ENCODE measurements at regions of chr3 and their contacts with region 1.

Region 1: GRCh38 chr3:71006810-71007785 is 576.4 kb downstream of the FOXP1 start:
- DNase-seq: no peak
- ATAC-seq: peak; percentile 48; the same call in 2 of the 3 replicates
- H3K4me3 ChIP-seq: no peak overlapping the region
- H3K27ac ChIP-seq: no peak overlapping the region
- H3K4me1 ChIP-seq: peaks cover 3% of the 10 kb centered on the region; the same call in 1 of the 2 replicates
- H3K27me3 ChIP-seq: no peaks in the 10 kb centered on the region
- CTCF ChIP-seq: peak; percentile 47 to 56 (median 47); a peak in 5 of 6 replicates
- EP300 ChIP-seq: no peak
- POLR2A ChIP-seq: no peak
- RAD21 ChIP-seq: peak; percentile 85

Region 2: DNA sequence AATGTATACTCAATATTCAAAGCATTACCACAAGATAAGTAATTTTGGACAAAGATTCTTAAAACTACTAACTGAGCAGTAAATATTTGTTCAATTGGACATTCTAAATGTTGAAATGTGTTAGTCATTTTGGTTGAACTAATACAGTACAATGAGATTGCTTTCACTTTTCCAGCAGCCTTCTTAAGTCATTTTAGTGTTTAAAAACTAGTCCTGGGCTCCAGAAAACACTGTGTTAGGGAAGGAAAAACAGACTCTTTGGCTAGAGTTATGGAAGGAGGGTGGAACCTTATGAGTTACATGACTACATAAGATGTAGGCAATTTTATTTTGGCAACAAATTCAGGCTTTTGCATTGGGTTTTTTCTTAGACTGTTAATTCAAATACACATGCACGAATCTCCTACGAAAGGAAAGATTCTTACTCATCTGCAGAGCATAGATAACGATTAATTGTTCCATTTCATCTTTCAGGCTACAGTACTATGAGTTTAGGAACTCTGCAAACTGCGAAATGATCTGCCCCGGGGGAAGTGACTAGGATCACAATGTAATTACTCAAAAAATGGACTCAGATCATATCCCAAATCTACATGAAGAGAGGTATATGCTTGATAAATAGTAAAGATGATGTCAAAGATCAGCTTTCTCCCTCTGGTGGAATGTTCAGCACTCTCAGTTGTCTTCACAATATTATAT is 201.9 kb before region 1 on chr3:
- CTCF ChIA-PET with region 1: no interaction called
- POLR2A ChIA-PET with region 1: no interaction called
- RAD21 ChIA-PET with region 1: no interaction called
- SMC1A ChIA-PET with region 1: no interaction called
- in situ Hi-C with region 1: no loop called
- intact Hi-C with region 1: no loop called
- DNase-seq: no peak
- ATAC-seq: no peak
- H3K4me3 ChIP-seq: no peak overlapping the region
- H3K27ac ChIP-seq: no peak overlapping the region
- H3K4me1 ChIP-seq: no peaks in the 10 kb centered on the region
- H3K27me3 ChIP-seq: no peaks in the 10 kb centered on the region
- CTCF ChIP-seq: no peak
- EP300 ChIP-seq: no peak
- POLR2A ChIP-seq: no peak
- RAD21 ChIP-seq: no peak

Region 3: DNA sequence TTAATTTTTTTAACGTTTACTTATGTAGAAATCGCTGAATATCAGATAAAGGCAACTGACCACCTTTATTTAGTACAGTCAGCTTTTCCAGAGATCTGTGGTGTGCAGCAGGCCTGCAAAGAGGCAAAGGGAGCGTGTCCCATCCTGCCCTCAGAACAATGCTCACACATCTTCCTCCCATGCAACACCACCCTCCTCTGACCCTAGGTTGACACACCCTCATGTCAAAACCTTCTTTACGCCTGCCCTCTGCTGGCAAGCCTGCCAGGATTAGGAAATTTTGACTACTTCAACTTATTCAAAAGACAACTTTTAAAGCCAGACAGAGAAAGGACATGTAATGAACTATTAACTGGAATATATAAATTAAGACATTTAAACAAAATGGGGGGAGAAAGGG is 62.7 kb after region 1 on chr3:
- CTCF ChIA-PET with region 1: interaction called, 3 read pairs
- POLR2A ChIA-PET with region 1: no interaction called
- RAD21 ChIA-PET with region 1: no interaction called
- SMC1A ChIA-PET with region 1: interaction called, 3 read pairs
- in situ Hi-C with region 1: no loop called
- intact Hi-C with region 1: loop called (anchors 1 kb)
- DNase-seq: no peak
- ATAC-seq: peak; percentile 77
- H3K4me3 ChIP-seq: no peak overlapping the region
- H3K27ac ChIP-seq: no peak overlapping the region
- H3K4me1 ChIP-seq: no peaks in the 10 kb centered on the region
- H3K27me3 ChIP-seq: peaks cover 4 to 9% of the 10 kb centered on the region in 2 experiments; a peak in 3 of 4 replicates
- CTCF ChIP-seq: peak; percentile 41 to 53 (median 52); a peak in 5 of 6 replicates
- EP300 ChIP-seq: no peak
- POLR2A ChIP-seq: no peak
- RAD21 ChIP-seq: peak; percentile 71

Region 4: GRCh38 chr3:71149959-71150954 is 143.2 kb after region 1 on chr3:
- CTCF ChIA-PET with region 1: no interaction called
- POLR2A ChIA-PET with region 1: no interaction called
- RAD21 ChIA-PET with region 1: no interaction called
- SMC1A ChIA-PET with region 1: no interaction called
- in situ Hi-C with region 1: no loop called
- intact Hi-C with region 1: loop called (anchors 10 kb)
- DNase-seq: no peak
- ATAC-seq: peak; percentile 21; the same call in 1 of the 3 replicates
- H3K4me3 ChIP-seq: no peak overlapping the region
- H3K27ac ChIP-seq: no peak overlapping the region
- H3K4me1 ChIP-seq: no peaks in the 10 kb centered on the region
- H3K27me3 ChIP-seq: no peaks in the 10 kb centered on the region
- CTCF ChIP-seq: no peak
- EP300 ChIP-seq: no peak
- POLR2A ChIP-seq: no peak
- RAD21 ChIP-seq: no peak

Region 5: GRCh38 chr3:71389911-71390573 is 382.9 kb after region 1 on chr3:
- CTCF ChIA-PET with region 1: no interaction called
- POLR2A ChIA-PET with region 1: no interaction called
- RAD21 ChIA-PET with region 1: no interaction called
- SMC1A ChIA-PET with region 1: interaction called, 3 read pairs
- in situ Hi-C with region 1: no loop called
- intact Hi-C with region 1: loop called (anchors 5 kb)
- DNase-seq: no peak
- ATAC-seq: no peak
- H3K4me3 ChIP-seq: no peak overlapping the region
- H3K27ac ChIP-seq: no peak overlapping the region
- H3K4me1 ChIP-seq: peaks cover 27% of the 10 kb centered on the region
- H3K27me3 ChIP-seq: no peaks in the 10 kb centered on the region
- CTCF ChIP-seq: no peak
- EP300 ChIP-seq: no peak
- POLR2A ChIP-seq: no peak
- RAD21 ChIP-seq: no peak

Region 6: GRCh38 chr3:71512000-71512399 is 504.9 kb after region 1 on chr3:
- CTCF ChIA-PET with region 1: interaction called, 5 read pairs
- POLR2A ChIA-PET with region 1: no interaction called
- RAD21 ChIA-PET with region 1: no interaction called
- SMC1A ChIA-PET with region 1: interaction called, 3 read pairs
- in situ Hi-C with region 1: no loop called
- intact Hi-C with region 1: loop called (anchors 5 kb)
- DNase-seq: no peak
- ATAC-seq: peak; percentile 78
- H3K4me3 ChIP-seq: no peak overlapping the region
- H3K27ac ChIP-seq: no peak overlapping the region
- H3K4me1 ChIP-seq: no peaks in the 10 kb centered on the region
- H3K27me3 ChIP-seq: no peaks in the 10 kb centered on the region; a peak in 1 of 4 replicates
- CTCF ChIP-seq: peak in 2 of 3 experiments; percentile 25 to 28; a peak in 3 of 6 replicates
- EP300 ChIP-seq: no peak
- POLR2A ChIP-seq: no peak
- RAD21 ChIP-seq: peak; percentile 53

Region 7: DNA sequence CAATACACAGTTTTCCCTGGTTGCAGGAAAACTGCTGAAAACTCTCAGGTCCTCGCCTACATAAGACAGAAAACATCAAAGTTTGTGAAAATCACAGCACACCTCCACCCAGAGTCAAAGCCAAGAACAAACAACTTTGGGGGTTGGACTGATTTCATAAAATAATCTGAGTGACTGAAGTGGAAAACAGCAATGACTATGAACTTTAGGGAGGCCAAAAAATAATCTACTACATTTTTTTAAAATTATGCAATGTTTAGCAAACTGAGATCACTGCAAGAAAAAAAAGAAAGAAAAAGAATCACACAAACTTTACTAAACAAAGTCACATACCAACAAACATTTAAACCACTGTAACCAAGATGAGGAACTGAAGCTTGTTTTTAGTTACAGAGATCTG is 592.3 kb after region 1 on chr3:
- CTCF ChIA-PET with region 1: no interaction called
- POLR2A ChIA-PET with region 1: no interaction called
- RAD21 ChIA-PET with region 1: no interaction called
- SMC1A ChIA-PET with region 1: no interaction called
- in situ Hi-C with region 1: loop called (anchors 10 kb)
- intact Hi-C with region 1: no loop called
- DNase-seq: no peak
- ATAC-seq: no peak
- H3K4me3 ChIP-seq: no peak overlapping the region
- H3K27ac ChIP-seq: no peak overlapping the region
- H3K4me1 ChIP-seq: no peaks in the 10 kb centered on the region
- H3K27me3 ChIP-seq: no peaks in the 10 kb centered on the region
- CTCF ChIP-seq: no peak
- EP300 ChIP-seq: no peak
- POLR2A ChIP-seq: no peak
- RAD21 ChIP-seq: no peak

Measured in GM12878 (cell line).